Activated CD8-positive, alpha-beta memory T cell treated with anti-CD3 and anti-CD28 coated beads, Interleukin-2, amount 10 ng/mL, durations not matched to agents 7 days and 5 days (primary cell): ENCODE measurements at regions of chr2 and their contacts with region 1.

Region 1: DNA sequence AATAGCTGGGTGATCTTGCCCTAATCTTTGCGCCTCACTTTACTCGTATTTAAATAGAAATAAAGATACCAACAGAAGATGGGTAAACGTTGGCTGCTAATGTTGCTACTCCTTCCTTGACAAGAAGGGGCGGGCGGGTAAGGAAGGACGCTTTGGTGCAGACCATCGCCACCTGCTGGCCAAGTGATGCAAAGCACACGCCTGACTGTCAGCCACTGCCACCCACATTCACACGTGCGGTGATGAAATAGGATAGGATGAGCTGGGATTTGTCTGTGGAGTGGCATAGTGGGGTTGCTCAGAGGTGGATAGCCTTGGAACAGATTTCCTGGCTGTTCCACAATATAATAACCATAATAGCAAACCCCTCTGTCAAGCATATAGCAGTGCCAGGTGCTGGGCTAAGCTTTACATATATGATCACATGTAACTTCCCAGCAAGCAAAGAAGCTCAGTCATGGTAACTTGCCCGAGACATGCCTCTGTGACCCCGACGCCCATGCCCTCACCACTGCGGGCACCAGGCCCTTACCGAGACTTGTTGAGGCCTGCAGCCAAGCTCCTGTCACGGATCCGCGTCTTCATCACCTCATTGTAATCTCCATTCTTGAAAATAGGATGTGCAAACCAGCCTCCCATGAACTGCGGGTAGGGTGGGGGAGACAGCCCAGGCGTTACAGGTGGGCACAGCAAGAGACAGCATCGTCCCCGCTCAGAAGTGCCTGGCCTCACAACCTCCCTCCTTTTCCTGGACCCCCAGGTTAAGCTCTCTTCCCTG is 39.3 kb downstream of the LCT start:
- DNase-seq: peak; percentile 87
- ATAC-seq: peak; percentile 87
- H3K4me3 Mint-ChIP-seq: no peak overlapping the region
- H3K27ac Mint-ChIP-seq: no peak overlapping the region
- H3K4me1 Mint-ChIP-seq: peaks cover 16% of the 10 kb centered on the region
- H3K27me3 Mint-ChIP-seq: no peaks in the 10 kb centered on the region

Region 2: DNA sequence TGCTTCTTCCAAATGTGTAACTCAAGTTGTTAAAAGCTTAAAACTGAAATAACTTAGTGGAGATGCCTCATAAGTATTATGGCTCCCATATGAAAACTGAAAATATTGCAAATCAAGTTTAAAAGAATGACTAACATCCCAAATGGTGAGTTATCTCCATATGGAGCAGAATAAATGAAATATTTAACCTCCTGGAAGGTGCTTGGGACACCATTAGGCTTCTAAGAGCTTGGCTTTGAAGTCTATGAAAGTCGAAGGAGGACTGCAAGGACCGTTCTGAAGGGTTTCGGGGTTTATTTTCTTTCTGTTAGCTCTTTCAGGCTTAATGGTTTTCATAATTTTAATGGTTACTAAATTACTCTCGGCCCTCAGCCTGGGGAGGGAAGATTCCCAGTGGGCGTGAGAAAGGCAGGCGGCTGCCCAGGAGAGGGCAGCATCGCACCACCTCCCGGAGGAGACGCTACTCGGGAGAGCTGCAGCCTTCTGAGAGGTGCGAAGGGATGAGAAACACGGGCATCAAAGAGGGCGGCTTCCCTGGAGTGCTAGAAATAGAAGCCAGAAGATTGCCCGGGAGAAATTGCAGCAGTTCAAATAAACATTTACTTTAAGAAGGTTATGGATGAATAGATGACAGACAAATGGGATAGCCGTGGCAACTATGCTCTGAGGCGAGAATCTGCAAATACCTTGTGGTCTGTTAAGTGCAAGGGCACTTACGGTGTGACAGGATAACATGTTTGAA is 793.5 kb before region 1 on chr2:
- CTCF ChIA-PET with region 1: interaction called, 14 read pairs
- DNase-seq: peak; percentile 75
- ATAC-seq: peak; percentile 99
- H3K4me3 Mint-ChIP-seq: no peak overlapping the region
- H3K27ac Mint-ChIP-seq: no peak overlapping the region
- H3K4me1 Mint-ChIP-seq: peaks cover 5% of the 10 kb centered on the region
- H3K27me3 Mint-ChIP-seq: peaks cover 30% of the 10 kb centered on the region

Region 3: DNA sequence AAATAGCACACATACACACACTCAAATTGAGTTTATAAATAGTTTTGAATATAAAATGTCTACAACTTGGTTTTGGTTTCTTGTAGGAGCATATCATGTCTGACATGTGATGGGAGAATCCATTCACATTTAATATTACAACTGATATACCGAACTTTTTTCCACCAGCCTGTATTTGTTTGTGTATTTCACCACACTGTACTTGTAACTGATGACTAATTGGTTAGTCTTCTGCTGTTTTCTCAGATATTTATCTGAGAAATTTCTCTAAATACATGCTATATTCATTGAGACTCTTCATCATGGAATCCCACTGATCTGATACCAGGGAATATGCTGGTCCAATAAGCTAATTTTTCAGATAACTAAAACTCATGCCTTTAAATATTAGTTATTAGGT is 112.3 kb before region 1 on chr2:
- CTCF ChIA-PET with region 1: no interaction called
- DNase-seq: no peak
- ATAC-seq: no peak
- H3K4me3 Mint-ChIP-seq: no peak overlapping the region
- H3K27ac Mint-ChIP-seq: no peak overlapping the region
- H3K4me1 Mint-ChIP-seq: peaks cover 18% of the 10 kb centered on the region
- H3K27me3 Mint-ChIP-seq: no peaks in the 10 kb centered on the region

Region 4: DNA sequence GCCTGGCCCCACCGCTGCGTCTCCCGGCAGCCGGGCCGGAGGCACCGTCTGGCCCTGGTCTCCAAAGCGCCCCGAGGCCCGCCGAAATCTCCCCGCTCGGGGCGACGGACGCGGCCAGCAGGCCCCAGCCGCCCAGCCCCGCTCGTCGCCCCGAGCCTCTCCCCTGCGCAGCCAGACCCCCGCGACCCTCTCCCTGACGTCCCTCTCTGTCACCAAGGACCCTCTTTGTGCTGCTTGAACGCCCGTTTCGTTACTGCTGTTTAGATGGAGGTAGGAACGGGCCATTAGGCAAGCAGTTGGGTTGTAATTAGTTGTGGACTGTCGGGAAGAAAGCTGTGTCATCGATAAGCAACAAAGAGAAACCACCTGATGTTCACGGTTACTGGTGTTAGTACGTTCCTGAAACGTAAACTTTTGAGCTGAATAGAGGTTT is 55.3 kb before region 1 on chr2:
- CTCF ChIA-PET with region 1: interaction called, 11 read pairs
- DNase-seq: peak; percentile 65
- ATAC-seq: peak; percentile 32
- H3K4me3 Mint-ChIP-seq: peak overlapping the region; percentile 89
- H3K27ac Mint-ChIP-seq: peak overlapping the region; percentile 99
- H3K4me1 Mint-ChIP-seq: peaks cover 32% of the 10 kb centered on the region
- H3K27me3 Mint-ChIP-seq: no peaks in the 10 kb centered on the region

Region 5: GRCh38 chr2:135785032-135785431 is 12.7 kb before region 1 on chr2:
- CTCF ChIA-PET with region 1: interaction called, 38 read pairs
- DNase-seq: no peak
- ATAC-seq: no peak
- H3K4me3 Mint-ChIP-seq: no peak overlapping the region
- H3K27ac Mint-ChIP-seq: no peak overlapping the region
- H3K4me1 Mint-ChIP-seq: peaks cover 2% of the 10 kb centered on the region
- H3K27me3 Mint-ChIP-seq: no peaks in the 10 kb centered on the region

Region 6: GRCh38 chr2:135812907-135813502 is 15.3 kb after region 1 on chr2:
- CTCF ChIA-PET with region 1: interaction called, 42 read pairs
- DNase-seq: no peak
- ATAC-seq: no peak
- H3K4me3 Mint-ChIP-seq: no peak overlapping the region
- H3K27ac Mint-ChIP-seq: no peak overlapping the region
- H3K4me1 Mint-ChIP-seq: peaks cover 2% of the 10 kb centered on the region
- H3K27me3 Mint-ChIP-seq: no peaks in the 10 kb centered on the region

Region 7: GRCh38 chr2:136384531-136385303 is 587.0 kb after region 1 on chr2:
- CTCF ChIA-PET with region 1: interaction called, 14 read pairs
- DNase-seq: peak; percentile 71
- ATAC-seq: peak; percentile 64
- H3K4me3 Mint-ChIP-seq: no peak overlapping the region
- H3K27ac Mint-ChIP-seq: peak overlapping the region; percentile 4
- H3K4me1 Mint-ChIP-seq: peaks cover 48% of the 10 kb centered on the region
- H3K27me3 Mint-ChIP-seq: peaks cover 3% of the 10 kb centered on the region